ENCODE measurements at regions of chr16 and their contacts with region 1.

Region 1: GRCh38 chr16:84277237-84277823 is 17.3 kb upstream of the WFDC1 start:
- DNase-seq: peak; percentile 79
- H3K4me3 ChIP-seq: peak overlapping the region in 1 of 2 experiments; percentile 49; a peak in 1 of 4 replicates
- H3K27ac ChIP-seq: no peak overlapping the region
- H3K4me1 ChIP-seq: no peaks in the 10 kb centered on the region; a peak in 1 of 4 replicates
- H3K27me3 ChIP-seq: no peaks in the 10 kb centered on the region
- CTCF ChIP-seq: peak; percentile 92
- EP300 ChIP-seq: no peak
- RAD21 ChIP-seq: peak; percentile 79

Region 2: DNA sequence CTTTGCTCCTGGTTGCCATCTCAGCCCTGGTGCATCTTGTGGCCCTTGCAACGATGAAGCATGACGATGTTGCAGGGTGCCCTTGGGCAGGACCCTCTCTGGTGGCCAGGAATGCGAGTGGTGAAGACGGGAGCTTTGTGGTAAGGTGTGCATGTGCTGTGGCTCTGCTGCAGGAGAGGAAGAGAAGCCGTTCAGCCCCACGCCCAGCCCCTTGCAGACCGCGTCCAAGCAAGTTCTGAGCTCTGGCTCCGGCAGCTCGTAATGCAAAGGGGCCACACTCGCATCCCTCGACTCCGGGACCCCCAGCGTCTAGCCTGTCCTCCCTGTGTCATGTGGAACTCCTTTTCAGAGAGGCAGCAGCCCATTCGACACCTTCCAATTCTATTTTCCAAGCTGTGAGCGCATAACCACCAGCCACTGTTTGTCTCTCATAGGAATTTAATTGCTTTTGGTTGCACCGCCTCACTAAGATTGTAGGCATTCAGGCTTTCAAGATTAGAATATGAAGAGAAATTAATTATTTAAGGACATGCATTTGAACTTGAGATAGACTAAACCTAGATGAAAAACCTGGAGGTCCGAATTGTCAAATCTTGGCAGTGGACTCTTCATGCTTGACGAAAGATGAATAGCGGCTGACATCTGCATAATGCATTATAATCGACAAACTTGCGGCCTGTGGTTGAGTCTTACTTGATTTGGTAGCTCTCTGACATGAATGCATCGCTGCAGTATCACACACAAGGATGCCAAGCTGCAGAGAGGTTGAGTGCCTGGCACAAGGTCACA is 16.4 kb before region 1 on chr16:
- CTCF ChIA-PET with region 1: interaction called, 49 read pairs
- POLR2A ChIA-PET with region 1: no interaction called
- DNase-seq: no peak
- H3K4me3 ChIP-seq: no peak overlapping the region
- H3K27ac ChIP-seq: no peak overlapping the region
- H3K4me1 ChIP-seq: no peaks in the 10 kb centered on the region
- H3K27me3 ChIP-seq: peaks cover 13% of the 10 kb centered on the region; the same call in 1 of the 2 replicates
- CTCF ChIP-seq: no peak
- EP300 ChIP-seq: no peak
- RAD21 ChIP-seq: no peak

Region 3: GRCh38 chr16:84288902-84289301 is 11.6 kb after region 1 on chr16:
- CTCF ChIA-PET with region 1: interaction called, 13 read pairs
- POLR2A ChIA-PET with region 1: no interaction called
- DNase-seq: no peak
- H3K4me3 ChIP-seq: no peak overlapping the region
- H3K27ac ChIP-seq: no peak overlapping the region
- H3K4me1 ChIP-seq: peaks cover 0 to 6% of the 10 kb centered on the region in 2 experiments; a peak in 1 of 4 replicates
- H3K27me3 ChIP-seq: no peaks in the 10 kb centered on the region; the same call in 1 of the 2 replicates
- CTCF ChIP-seq: no peak
- EP300 ChIP-seq: no peak
- RAD21 ChIP-seq: no peak

Region 4: GRCh38 chr16:84308120-84308519 is 30.8 kb after region 1 on chr16:
- CTCF ChIA-PET with region 1: interaction called, 53 read pairs
- POLR2A ChIA-PET with region 1: no interaction called
- DNase-seq: peak; percentile 83
- H3K4me3 ChIP-seq: no peak overlapping the region
- H3K27ac ChIP-seq: no peak overlapping the region
- H3K4me1 ChIP-seq: no peaks in the 10 kb centered on the region
- H3K27me3 ChIP-seq: peaks cover 18% of the 10 kb centered on the region; the same call in 1 of the 2 replicates
- CTCF ChIP-seq: peak; percentile 53
- EP300 ChIP-seq: no peak
- RAD21 ChIP-seq: peak; percentile 80

Region 5: DNA sequence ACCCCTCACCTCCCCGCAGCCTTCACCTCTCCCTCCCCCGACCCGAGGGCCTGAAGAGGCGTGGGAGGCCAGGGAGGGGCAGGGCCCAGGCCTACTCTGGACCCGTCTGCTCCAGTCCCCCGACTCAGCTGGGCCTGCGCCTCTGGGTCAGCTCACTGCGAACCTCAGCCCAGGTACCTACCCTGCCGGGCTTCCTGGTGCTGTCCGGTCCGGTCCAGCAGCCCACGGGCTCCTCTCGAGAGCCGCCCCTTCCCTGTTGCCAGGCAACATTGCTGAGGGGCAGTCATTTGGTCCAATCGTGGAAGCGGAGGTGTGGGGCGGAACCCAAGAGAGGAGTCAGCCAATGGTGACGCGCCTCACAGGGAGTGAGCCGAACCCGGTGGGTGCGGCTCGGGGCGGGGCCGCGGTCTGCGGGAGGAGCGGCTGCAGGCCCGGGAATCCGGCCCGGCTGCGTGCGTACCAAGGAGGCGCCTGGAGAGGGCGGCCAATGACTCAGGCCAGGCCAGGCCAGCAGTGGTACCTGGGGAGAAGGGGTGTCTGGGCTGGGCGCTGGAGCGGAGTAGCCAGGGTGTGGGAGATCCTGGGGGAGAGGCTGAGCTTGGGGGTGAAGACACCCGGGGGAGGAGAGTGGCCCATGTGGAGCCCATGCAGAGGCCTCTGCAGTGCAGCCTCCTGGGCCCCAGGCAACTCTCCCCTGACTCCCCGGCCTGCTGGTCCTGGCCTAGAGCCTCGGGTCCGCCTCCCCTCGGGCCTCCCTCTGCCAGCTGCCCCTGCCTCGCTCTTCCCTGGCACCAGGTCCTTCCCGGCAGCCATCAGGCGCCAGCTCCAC is 227.3 kb after region 1 on chr16 and contains the start of gene MEAK7:
- CTCF ChIA-PET with region 1: interaction called, 10 read pairs
- POLR2A ChIA-PET with region 1: no interaction called
- DNase-seq: peak; percentile 98
- H3K4me3 ChIP-seq: peak within 1 kb of the TSS; percentile 73 to 93
- H3K27ac ChIP-seq: peak within 1 kb of the TSS; percentile 67 to 82
- H3K4me1 ChIP-seq: peaks cover 14 to 18% of the 10 kb centered on the region in 2 experiments; a peak in 3 of 4 replicates
- H3K27me3 ChIP-seq: no peaks in the 10 kb centered on the region
- CTCF ChIP-seq: peak; percentile 19; the same call in 1 of the 2 replicates
- EP300 ChIP-seq: no peak
- RAD21 ChIP-seq: no peak
- polyA plus RNA-seq, gene MEAK7: 11.9 and 19.0 TPM in 2 replicates

Measured in SK-N-SH (cell line).